T-cell (primary cell): ENCODE measurements at regions of chr4 and their contacts with region 1.

Region 1: DNA sequence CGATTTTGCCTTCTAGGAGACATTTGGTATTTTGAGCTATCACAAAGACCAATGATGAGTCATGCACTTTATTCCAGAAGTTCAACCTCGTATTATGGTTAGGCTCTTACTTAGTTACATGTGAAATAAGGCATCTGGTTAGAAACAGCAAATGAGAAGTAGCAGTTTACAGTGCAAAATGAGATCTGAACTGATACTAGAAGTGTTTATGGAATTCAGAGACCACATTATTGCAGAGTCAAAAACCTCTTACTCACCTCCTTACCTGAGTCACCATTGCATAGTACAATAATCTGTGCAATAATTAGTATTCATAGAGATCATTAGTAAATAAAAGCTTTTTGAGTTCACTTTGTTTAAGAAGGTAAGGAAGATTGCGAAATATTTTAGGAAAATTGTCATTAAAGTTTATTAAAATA is 38.7 kb downstream of the SEC24B start:
- DNase-seq: no peak
- ATAC-seq: no peak
- H3K4me3 ChIP-seq: no peak overlapping the region
- H3K4me3 Mint-ChIP-seq: no peak overlapping the region
- H3K27ac ChIP-seq: no peak overlapping the region
- H3K27ac Mint-ChIP-seq: no peak overlapping the region
- H3K4me1 ChIP-seq: peaks cover 0 to 2% of the 10 kb centered on the region in 2 experiments
- H3K4me1 Mint-ChIP-seq: peaks cover 54 to 62% (median 59%) of the 10 kb centered on the region in 3 donors
- H3K27me3 ChIP-seq: no peaks in the 10 kb centered on the region
- H3K27me3 Mint-ChIP-seq: no peaks in the 10 kb centered on the region

Region 2: GRCh38 chr4:109302361-109303139 is 169.8 kb before region 1 on chr4 and contains the start of gene COL25A1:
- CTCF ChIA-PET with region 1: no interaction called
- POLR2A ChIA-PET with region 1: interaction called in 1 of 2 experiments, 13 read pairs
- DNase-seq: peak in 33 of 35 experiments; percentile 2 to 61 (median 25)
- ATAC-seq: peak; percentile 64 to 94 (median 73)
- H3K4me3 ChIP-seq: peak within 1 kb of the TSS; percentile 50 to 88
- H3K4me3 Mint-ChIP-seq: peak within 1 kb of the TSS; percentile 70 to 79 (median 75)
- H3K27ac ChIP-seq: no peak within 1 kb of the TSS
- H3K27ac Mint-ChIP-seq: no peak within 1 kb of the TSS
- H3K4me1 ChIP-seq: peaks cover 6 to 21% of the 10 kb centered on the region in 2 experiments
- H3K4me1 Mint-ChIP-seq: peaks cover 16 to 25% (median 21%) of the 10 kb centered on the region in 3 donors
- H3K27me3 ChIP-seq: peaks cover 0 to 24% of the 10 kb centered on the region in 2 experiments
- H3K27me3 Mint-ChIP-seq: peaks cover 23 to 59% of the 10 kb centered on the region in 2 donors
- total RNA-seq, gene COL25A1: 0.53 to 0.56 TPM in 2 of 5 donors, not detected in the others

Region 3: DNA sequence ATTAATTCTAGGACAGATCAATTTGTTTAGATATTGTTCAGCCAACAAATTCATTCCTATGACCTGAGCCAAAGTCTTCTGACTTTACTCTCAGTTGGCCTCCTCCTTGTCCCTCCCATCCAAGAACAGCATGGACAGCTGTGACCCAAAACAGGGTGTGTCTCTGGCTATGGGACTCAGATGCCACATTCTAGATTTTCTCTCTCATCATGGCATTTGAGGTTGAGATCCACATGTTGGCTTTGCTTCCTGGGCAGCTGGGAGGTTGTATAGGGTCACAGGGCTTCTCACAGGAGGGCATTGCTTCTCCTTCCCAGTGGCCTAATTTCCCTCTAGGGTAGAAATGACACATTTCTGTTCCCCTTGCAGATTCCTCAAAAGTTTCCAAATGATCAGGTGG is 417.7 kb after region 1 on chr4:
- CTCF ChIA-PET with region 1: no interaction called
- POLR2A ChIA-PET with region 1: no interaction called
- DNase-seq: no peak
- ATAC-seq: no peak
- H3K4me3 ChIP-seq: no peak overlapping the region
- H3K4me3 Mint-ChIP-seq: no peak overlapping the region
- H3K27ac ChIP-seq: no peak overlapping the region
- H3K27ac Mint-ChIP-seq: no peak overlapping the region
- H3K4me1 ChIP-seq: no peaks in the 10 kb centered on the region
- H3K4me1 Mint-ChIP-seq: no peaks in the 10 kb centered on the region
- H3K27me3 ChIP-seq: peaks cover 0 to 3% of the 10 kb centered on the region in 2 experiments
- H3K27me3 Mint-ChIP-seq: no peaks in the 10 kb centered on the region